ENCODE measurements at regions of chr10 and their contacts with region 1.

Region 1: DNA sequence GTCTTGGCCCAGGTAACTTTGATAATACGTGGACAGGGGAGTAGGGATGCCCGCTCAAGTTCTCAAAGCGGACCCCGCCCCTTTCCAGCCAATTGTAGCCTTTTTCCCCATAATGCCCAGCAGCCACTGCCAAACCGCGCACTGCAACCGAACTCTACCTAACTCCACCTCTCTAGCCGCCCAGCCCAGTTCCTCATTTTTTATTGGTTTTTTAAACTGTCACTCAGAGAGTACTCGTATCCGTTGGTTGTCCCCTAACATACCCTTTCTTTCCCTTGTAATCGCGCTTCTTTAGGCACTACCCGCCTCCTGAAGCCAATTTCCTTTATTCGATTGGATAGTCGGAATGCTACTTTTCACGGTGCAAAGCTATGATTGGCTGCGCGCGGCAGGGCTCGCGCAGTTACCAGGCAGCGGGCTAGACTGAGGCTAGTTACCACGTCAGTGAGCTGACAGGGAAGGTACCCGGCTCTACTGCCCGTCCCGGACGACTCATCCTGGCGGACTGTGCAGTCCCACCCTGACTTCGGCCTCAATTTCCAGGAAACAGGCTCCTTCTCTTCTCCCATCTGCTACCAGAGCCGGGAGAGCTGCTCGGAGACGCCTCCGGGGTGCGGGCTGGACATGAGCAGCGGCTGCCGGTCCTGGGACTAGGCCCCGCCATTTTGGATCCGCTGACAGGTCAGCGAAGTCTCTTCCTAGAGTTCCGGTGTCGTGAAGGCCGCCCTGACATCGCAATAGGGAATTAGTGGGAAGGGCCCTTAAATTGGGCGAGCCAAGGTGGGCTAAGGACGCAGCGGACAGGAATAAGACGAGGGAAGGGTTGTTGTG is at the start of gene GBF1:
- DNase-seq: peak; percentile 95
- H3K4me3 Mint-ChIP-seq: peak within 1 kb of the TSS; percentile 92
- H3K27ac Mint-ChIP-seq: peak within 1 kb of the TSS; percentile 86
- H3K4me1 Mint-ChIP-seq: peaks cover 41% of the 10 kb centered on the region
- H3K27me3 Mint-ChIP-seq: peaks cover 15% of the 10 kb centered on the region
- total RNA-seq, gene GBF1: 32.1 to 34.5 TPM

Region 2: DNA sequence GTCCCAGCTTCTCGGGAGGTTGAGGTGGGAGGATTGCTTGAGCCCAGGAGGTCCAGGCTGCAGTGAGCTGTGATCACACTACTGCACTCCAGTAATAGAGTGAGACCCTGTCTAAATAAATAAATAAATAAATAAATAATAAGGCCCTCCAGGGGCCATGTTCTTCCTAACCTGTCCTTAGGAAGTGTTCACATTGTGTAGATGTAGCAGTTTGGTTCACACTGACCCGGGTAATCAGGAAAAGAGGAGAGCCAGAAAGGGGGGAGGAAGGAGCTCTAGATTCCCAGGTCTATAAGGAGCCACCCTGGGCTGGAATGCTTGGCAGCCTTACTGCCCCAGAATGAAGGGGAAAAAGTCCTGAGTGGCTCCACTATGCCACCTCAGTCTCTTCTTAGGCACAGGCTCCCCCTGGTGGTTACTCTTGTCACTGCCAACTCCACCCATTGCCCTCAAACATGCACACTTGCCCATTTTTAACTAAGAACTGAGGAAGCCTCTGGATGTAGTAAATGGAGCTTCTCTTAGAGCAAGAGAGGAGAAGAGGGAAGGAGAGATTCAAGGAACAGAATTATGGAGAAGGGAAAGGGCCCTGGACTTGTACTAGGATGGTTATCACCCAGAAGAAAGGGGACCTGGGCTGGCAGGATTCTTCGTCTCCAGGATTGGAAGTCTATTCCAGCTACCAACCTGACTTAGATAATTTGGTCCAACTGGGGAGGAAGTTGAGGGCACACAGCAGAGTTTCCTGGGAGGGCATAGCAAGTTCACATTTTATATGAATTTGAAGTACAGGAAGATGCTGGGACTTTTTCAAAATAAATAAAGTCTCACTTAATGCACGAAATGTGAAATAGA is 172.4 kb before region 1 on chr10:
- CTCF ChIA-PET with region 1: no interaction called
- intact Hi-C with region 1: no loop called
- DNase-seq: peak; percentile 90
- H3K4me3 Mint-ChIP-seq: no peak overlapping the region
- H3K27ac Mint-ChIP-seq: no peak overlapping the region
- H3K4me1 Mint-ChIP-seq: no peaks in the 10 kb centered on the region
- H3K27me3 Mint-ChIP-seq: no peaks in the 10 kb centered on the region

Region 3: DNA sequence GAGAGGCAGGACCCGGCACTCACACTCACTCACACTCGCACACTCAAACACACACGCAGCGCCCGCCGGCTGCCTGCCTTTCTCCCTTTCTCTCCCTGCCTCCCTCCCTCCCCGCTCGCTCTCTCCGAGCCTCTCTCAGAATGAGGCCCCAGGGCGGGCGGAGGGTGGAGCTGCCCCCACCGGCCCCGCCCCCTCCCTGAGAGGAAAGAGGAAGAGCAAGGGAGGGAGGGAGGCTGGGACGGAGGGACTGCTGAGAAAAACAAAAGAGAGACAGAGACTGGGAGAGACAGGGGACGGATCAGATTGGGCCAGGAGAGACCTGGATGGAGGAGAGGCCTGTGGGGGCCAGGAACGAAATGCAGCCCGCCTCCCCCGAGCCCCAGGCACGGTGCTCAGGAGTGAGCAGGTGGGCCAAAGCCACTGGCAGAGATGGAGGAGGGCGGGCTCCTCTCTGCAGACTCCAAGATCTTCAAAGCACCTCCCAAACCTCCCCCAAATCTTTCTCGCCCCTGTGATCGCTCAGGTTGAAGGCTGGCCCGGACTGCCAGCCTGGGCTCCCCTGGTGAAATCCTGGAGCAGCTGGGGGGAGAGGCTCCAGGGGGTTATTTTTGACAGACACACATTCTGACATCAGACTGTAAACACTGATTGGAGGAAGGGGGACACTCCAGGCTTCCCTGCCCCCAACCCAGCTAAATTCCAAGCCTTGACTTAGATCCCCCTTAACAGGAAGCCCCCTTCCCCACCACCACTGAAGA is 130.3 kb before region 1 on chr10:
- CTCF ChIA-PET with region 1: no interaction called
- intact Hi-C with region 1: loop called (anchors 5 kb)
- DNase-seq: peak; percentile 92
- H3K4me3 Mint-ChIP-seq: peak overlapping the region; percentile 93
- H3K27ac Mint-ChIP-seq: peak overlapping the region; percentile 98
- H3K4me1 Mint-ChIP-seq: peaks cover 53% of the 10 kb centered on the region
- H3K27me3 Mint-ChIP-seq: no peaks in the 10 kb centered on the region

Region 4: DNA sequence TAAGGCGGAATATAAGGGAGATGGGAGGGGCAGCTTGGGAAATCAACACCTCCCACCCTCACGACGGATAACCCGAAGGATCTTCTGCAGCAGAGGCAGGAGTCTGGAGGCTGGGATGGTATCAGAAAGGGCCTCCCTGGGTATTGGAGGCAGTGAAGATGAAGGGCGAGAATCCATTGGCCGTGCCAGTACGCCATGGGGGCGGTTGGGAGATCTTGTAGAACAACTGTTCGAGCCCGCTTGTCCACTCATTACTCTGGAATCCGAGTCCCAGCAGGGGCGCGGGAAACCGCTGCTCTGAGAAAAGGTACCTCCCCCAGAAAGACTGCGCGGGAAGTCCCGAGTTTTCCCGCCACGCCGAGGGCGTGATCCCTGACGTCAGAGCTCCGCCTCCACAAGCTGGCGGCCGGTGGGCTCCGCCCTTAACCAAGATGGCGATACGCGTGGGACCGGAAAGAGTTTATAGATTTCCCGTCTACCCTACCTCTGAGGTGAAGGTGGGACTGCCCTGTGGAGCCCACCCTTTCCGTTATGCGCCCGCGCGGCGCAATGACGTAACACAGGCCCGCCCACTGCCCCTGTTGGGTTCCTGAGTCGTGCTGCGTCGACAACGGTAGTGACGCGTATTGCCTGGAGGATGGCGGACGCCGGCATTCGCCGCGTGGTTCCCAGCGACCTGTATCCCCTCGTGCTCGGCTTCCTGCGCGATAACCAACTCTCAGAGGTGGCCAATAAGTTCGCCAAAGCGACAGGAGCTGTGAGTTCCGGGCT is 93.4 kb before region 1 on chr10 and contains the start of gene NOLC1:
- CTCF ChIA-PET with region 1: no interaction called
- intact Hi-C with region 1: loop called (anchors 1 kb)
- DNase-seq: peak; percentile 100
- H3K4me3 Mint-ChIP-seq: peak within 1 kb of the TSS; percentile 98
- H3K27ac Mint-ChIP-seq: peak within 1 kb of the TSS; percentile 96
- H3K4me1 Mint-ChIP-seq: peaks cover 53% of the 10 kb centered on the region
- H3K27me3 Mint-ChIP-seq: no peaks in the 10 kb centered on the region
- total RNA-seq, gene NOLC1: 182 to 194 TPM

Region 5: DNA sequence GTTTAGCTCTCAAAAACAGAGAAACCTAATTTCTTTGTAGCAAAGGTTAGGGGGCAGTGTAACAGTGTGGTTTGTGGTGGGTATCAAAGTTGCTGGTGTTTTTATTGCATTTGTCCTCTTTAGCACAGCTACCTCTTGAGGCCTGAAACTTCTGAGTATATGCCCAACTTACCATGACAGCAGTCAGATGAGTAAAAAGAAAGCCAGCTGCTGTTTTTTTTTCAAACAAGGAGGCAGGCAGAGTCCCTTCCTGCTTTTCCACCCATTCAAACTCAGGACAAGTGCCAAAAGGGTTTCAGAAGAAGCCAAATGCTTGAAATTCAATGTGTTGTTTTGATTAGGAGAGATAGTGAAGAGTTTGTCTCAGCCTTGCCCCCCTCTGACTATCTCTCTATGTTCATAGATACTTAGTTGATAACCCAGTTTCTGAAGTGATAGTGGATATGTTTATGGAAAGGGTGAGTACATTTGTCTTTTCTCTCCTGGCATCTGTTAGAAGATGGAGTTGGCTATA is 23.1 kb after region 1 on chr10:
- CTCF ChIA-PET with region 1: no interaction called
- intact Hi-C with region 1: loop called (anchors 1 kb)
- DNase-seq: no peak
- H3K4me3 Mint-ChIP-seq: no peak overlapping the region
- H3K27ac Mint-ChIP-seq: peak overlapping the region; percentile 87
- H3K4me1 Mint-ChIP-seq: peaks cover 65% of the 10 kb centered on the region
- H3K27me3 Mint-ChIP-seq: no peaks in the 10 kb centered on the region

Region 6: GRCh38 chr10:102342958-102343357 is 97.6 kb after region 1 on chr10:
- CTCF ChIA-PET with region 1: interaction called, 685 read pairs
- intact Hi-C with region 1: loop called (anchors 1 kb)
- DNase-seq: no peak
- H3K4me3 Mint-ChIP-seq: no peak overlapping the region
- H3K27ac Mint-ChIP-seq: no peak overlapping the region
- H3K4me1 Mint-ChIP-seq: peaks cover 31% of the 10 kb centered on the region
- H3K27me3 Mint-ChIP-seq: no peaks in the 10 kb centered on the region

Region 7: DNA sequence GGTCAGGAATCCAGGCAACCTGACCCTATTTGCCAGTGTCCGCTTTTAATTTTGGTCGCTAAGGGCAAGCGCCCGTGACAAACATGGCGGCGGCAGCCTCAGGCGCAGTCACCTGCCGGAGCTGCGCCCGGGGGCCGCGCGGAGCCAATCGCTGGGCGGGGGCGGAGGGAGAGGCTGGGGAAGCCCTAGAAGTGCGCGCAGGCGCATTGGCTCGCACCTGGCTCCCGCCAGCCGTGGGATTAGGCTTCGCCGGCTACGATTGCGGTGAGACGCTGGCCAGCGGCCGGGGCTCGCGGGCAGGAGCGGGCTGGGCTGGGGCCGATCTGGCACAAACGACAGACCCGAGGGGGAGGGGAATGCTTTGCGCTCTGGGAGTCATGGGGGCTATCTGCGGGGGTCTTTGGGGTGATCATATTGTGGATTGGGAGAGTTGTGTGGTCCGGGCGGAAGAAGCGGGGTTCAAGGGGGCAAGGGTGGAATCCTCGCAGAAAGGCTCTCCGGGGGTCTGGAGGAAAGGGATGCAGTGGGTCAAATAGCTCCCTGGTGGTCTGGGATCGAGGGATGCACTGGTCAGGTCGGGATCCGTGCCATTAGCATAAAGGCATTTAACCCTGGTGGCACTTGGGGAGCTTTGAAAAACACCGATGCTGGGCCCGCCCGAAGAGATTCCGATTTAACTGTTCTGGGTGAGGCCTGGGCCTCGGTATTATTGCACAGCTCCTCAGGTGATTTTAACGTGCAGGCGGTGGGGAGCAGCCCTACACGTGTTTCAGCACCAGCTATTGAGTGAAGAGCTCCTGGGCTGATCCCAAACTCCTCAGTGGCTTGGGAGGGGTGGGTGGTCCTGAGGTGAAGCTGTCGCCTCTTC is 216.1 kb after region 1 on chr10:
- CTCF ChIA-PET with region 1: no interaction called
- intact Hi-C with region 1: loop called (anchors 1 kb)
- DNase-seq: peak; percentile 94
- H3K4me3 Mint-ChIP-seq: peak overlapping the region; percentile 88
- H3K27ac Mint-ChIP-seq: peak overlapping the region; percentile 73
- H3K4me1 Mint-ChIP-seq: peaks cover 23% of the 10 kb centered on the region
- H3K27me3 Mint-ChIP-seq: no peaks in the 10 kb centered on the region